ENCODE measurements at regions of chr13 and their contacts with region 1.

Region 1: GRCh38 chr13:76886292-76887075 is at the start of gene KCTD12:
- DNase-seq: peak; percentile 75
- H3K4me3 Mint-ChIP-seq: peak within 1 kb of the TSS; percentile 88
- H3K27ac Mint-ChIP-seq: peak within 1 kb of the TSS; percentile 75
- H3K4me1 Mint-ChIP-seq: peaks cover 32% of the 10 kb centered on the region
- H3K27me3 Mint-ChIP-seq: peaks cover 25% of the 10 kb centered on the region
- total RNA-seq, gene KCTD12: 12.7 and 13.2 TPM in 2 replicates

Region 2: DNA sequence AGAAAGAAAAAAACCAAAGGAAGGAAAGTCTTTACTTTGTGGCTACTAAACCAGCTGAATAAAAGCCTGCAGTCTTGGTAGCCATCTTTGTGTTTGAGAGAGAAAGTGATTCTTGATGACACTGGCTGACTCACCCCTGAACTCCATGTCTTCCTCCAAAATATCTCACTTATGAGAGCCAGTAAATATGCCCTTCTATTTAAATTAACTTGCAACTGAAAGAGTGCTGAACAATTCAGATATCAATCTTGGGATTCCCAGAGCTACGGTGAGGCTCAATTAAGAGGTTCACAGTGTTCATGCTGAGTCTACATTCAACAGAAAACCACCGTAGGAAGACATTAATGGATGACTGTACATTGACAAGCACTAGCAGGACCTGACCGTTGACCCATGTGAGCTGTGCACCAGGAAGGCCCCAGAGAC is 58.2 kb before region 1 on chr13:
- intact Hi-C with region 1: loop called (anchors 1 kb)
- DNase-seq: no peak
- H3K4me3 Mint-ChIP-seq: no peak overlapping the region
- H3K27ac Mint-ChIP-seq: no peak overlapping the region
- H3K4me1 Mint-ChIP-seq: peaks cover 4% of the 10 kb centered on the region
- H3K27me3 Mint-ChIP-seq: peaks cover 2% of the 10 kb centered on the region

Region 3: GRCh38 chr13:76991796-76992547 is 105.5 kb after region 1 on chr13 and contains the start of gene CLN5:
- intact Hi-C with region 1: loop called (anchors 5 kb)
- DNase-seq: peak; percentile 95
- H3K4me3 Mint-ChIP-seq: peak within 1 kb of the TSS; percentile 89
- H3K27ac Mint-ChIP-seq: peak within 1 kb of the TSS; percentile 90
- H3K4me1 Mint-ChIP-seq: peaks cover 34% of the 10 kb centered on the region
- H3K27me3 Mint-ChIP-seq: peaks cover 1% of the 10 kb centered on the region
- total RNA-seq, gene CLN5: 13.5 and 15.8 TPM in 2 replicates

Region 4: DNA sequence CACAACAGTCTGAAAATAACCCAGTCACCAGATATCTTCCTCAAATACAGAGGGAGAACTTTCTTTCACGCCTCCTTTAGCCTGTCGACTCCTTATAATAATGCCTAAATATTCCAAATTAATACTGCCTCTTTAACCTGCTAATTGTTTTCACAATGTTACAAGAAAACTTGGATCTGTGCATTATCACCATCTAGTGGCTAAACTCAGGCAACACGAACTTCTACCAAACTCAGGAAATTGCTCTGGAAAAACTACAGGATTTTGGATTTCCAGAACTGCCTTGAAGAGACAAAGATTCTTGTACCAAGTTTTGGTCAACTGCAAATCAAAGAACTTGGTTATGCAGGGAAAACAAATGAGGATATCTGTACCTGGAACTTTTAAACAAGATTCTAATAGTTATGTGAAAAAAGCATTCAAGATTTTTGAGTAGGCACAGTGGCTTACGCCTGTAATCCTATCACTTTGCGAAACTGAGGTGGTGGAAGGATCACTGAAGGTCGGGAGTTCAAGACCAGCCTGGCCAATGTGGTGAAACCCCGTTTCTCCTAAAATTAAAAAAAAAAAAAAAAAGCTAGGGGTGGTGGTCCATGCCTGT is 116.2 kb after region 1 on chr13:
- intact Hi-C with region 1: no loop called
- DNase-seq: no peak
- H3K4me3 Mint-ChIP-seq: no peak overlapping the region
- H3K27ac Mint-ChIP-seq: no peak overlapping the region
- H3K4me1 Mint-ChIP-seq: peaks cover 13% of the 10 kb centered on the region
- H3K27me3 Mint-ChIP-seq: no peaks in the 10 kb centered on the region

Region 5: GRCh38 chr13:77374786-77375185 is 488.3 kb after region 1 on chr13:
- intact Hi-C with region 1: no loop called
- DNase-seq: no peak
- H3K4me3 Mint-ChIP-seq: no peak overlapping the region
- H3K27ac Mint-ChIP-seq: no peak overlapping the region
- H3K4me1 Mint-ChIP-seq: no peaks in the 10 kb centered on the region
- H3K27me3 Mint-ChIP-seq: peaks cover 15% of the 10 kb centered on the region